Mammary epithelial cell (primary cell): ENCODE measurements at regions of chr13 and their contacts with region 1.

Region 1: GRCh38 chr13:38914070-38914469 is 76.6 kb downstream of the STOML3 start:
- DNase-seq: no peak
- H3K4me3 ChIP-seq: no peak overlapping the region
- H3K27ac ChIP-seq: no peak overlapping the region
- H3K4me1 ChIP-seq: peaks cover 11% of the 10 kb centered on the region
- H3K27me3 ChIP-seq: no peaks in the 10 kb centered on the region
- CTCF ChIP-seq: no peak

Region 2: DNA sequence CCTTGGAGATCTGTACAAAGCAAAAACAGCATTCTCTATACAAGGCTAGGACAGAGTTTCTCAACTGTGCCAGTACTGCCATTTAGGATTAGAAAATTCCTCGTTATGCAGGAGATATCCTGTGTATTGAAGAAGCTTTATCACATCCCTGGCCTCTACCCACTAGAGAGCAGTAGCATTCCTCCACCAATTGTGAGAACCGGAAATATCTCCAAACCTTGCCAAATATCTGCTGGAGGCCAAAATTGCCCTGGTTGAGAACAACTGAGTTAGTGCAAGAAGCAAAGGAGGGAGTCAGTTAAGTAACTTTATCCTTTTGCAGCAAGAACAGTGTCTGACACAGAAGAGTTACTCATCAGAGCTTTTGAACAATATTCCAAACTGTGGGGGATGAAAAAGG is 243.4 kb before region 1 on chr13:
- CTCF ChIA-PET with region 1: no interaction called
- dilution Hi-C with region 1: no loop called
- in situ Hi-C with region 1: loop called in 1 of 2 experiments (anchors 25 kb)
- intact Hi-C with region 1: loop called (anchors 5 kb)
- DNase-seq: peak; percentile 42
- H3K4me3 ChIP-seq: no peak overlapping the region
- H3K27ac ChIP-seq: no peak overlapping the region
- H3K4me1 ChIP-seq: no peaks in the 10 kb centered on the region
- H3K27me3 ChIP-seq: no peaks in the 10 kb centered on the region
- CTCF ChIP-seq: peak; percentile 41 to 51

Region 3: GRCh38 chr13:38763439-38764381 is 150.4 kb before region 1 on chr13:
- CTCF ChIA-PET with region 1: no interaction called
- dilution Hi-C with region 1: no loop called
- in situ Hi-C with region 1: no loop called
- intact Hi-C with region 1: loop called (anchors 2 kb)
- DNase-seq: peak; percentile 23
- H3K4me3 ChIP-seq: no peak overlapping the region
- H3K27ac ChIP-seq: no peak overlapping the region
- H3K4me1 ChIP-seq: peaks cover 10% of the 10 kb centered on the region
- H3K27me3 ChIP-seq: no peaks in the 10 kb centered on the region
- CTCF ChIP-seq: peak; percentile 75 to 83

Region 4: DNA sequence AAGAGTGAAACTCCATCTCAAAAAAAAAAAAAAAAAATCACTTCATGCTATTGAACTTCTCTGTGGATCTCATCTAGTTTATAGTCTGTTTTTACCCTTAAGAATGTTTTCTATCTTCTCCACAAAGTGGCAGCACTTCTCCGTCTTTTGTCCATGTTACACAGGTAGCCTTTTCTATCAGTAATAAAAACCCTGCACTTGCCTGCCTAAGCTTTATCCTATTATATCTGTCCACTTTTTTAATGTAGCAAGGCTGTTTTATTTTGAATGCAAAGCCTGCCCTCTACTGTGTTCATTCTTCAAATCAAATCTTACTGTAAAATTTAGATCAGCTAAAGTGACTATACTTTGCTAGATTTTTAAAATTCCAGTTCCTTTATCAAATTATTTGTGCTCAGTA is 47.4 kb before region 1 on chr13:
- CTCF ChIA-PET with region 1: no interaction called
- dilution Hi-C with region 1: no loop called
- in situ Hi-C with region 1: no loop called
- intact Hi-C with region 1: loop called (anchors 1 kb)
- DNase-seq: peak; percentile 23
- H3K4me3 ChIP-seq: no peak overlapping the region
- H3K27ac ChIP-seq: no peak overlapping the region
- H3K4me1 ChIP-seq: no peaks in the 10 kb centered on the region
- H3K27me3 ChIP-seq: no peaks in the 10 kb centered on the region
- CTCF ChIP-seq: no peak

Region 5: DNA sequence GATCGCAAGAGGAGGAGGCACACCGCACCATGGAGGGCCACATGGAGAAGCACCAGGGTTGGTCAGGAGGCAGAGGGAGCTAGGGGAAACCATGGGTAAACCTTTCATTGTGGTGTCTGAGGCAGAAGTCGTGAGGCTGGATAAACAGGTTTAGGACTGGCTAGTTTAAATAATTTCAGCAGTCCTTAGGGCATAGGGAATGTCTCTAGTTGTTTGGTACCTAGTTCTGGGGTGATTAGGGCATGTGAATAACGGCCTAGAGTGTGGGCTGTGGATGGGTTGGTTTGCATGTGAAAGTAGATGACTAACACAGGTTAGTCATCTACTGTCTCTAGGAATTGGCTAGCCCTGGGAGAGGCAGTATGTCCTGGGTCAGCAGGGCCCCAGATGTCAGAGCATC is 25.8 kb before region 1 on chr13:
- CTCF ChIA-PET with region 1: no interaction called
- dilution Hi-C with region 1: no loop called
- in situ Hi-C with region 1: no loop called
- intact Hi-C with region 1: no loop called
- DNase-seq: peak; percentile 85
- H3K4me3 ChIP-seq: no peak overlapping the region
- H3K27ac ChIP-seq: no peak overlapping the region
- H3K4me1 ChIP-seq: peaks cover 13% of the 10 kb centered on the region
- H3K27me3 ChIP-seq: no peaks in the 10 kb centered on the region
- CTCF ChIP-seq: no peak

Region 6: DNA sequence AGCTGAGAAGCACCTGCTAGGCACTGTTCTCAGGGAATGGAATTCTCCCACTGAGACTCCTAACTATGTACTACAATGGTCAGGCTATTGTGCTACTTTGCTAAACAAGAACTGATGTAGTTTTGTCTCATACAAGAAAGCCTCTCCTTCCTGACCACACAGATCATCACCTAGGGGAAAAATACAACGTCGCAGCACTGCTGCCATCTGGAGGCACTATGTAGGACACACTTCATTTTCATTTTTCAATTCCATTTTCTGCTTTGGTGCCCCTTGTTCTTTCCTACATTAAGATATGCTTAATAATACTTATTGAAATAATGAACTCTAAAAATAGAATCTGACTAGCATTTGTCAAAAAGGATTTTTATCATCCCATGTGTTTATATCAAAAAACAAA is 102.7 kb after region 1 on chr13:
- CTCF ChIA-PET with region 1: no interaction called
- dilution Hi-C with region 1: no loop called
- in situ Hi-C with region 1: no loop called
- intact Hi-C with region 1: loop called (anchors 1 kb)
- DNase-seq: peak; percentile 37
- H3K4me3 ChIP-seq: no peak overlapping the region
- H3K27ac ChIP-seq: no peak overlapping the region
- H3K4me1 ChIP-seq: no peaks in the 10 kb centered on the region
- H3K27me3 ChIP-seq: no peaks in the 10 kb centered on the region
- CTCF ChIP-seq: peak; percentile 45 to 68